ENCODE measurements at regions of chr3 and their contacts with region 1.

Region 1: GRCh38 chr3:15268033-15268631 is 62.1 kb downstream of the CAPN7 start:
- DNase-seq: peak; percentile 79 to 93 (median 82)
- ATAC-seq: peak; percentile 39
- H3K4me3 ChIP-seq: no peak overlapping the region
- H3K4me3 Mint-ChIP-seq: peak overlapping the region; percentile 8
- H3K27ac ChIP-seq: no peak overlapping the region
- H3K27ac Mint-ChIP-seq: peak overlapping the region; percentile 75
- H3K4me1 ChIP-seq: peaks cover 83% of the 10 kb centered on the region
- H3K4me1 Mint-ChIP-seq: peaks cover 86% of the 10 kb centered on the region
- H3K27me3 ChIP-seq: no peaks in the 10 kb centered on the region
- H3K27me3 Mint-ChIP-seq: no peaks in the 10 kb centered on the region
- CTCF ChIP-seq: peak; percentile 84

Region 2: DNA sequence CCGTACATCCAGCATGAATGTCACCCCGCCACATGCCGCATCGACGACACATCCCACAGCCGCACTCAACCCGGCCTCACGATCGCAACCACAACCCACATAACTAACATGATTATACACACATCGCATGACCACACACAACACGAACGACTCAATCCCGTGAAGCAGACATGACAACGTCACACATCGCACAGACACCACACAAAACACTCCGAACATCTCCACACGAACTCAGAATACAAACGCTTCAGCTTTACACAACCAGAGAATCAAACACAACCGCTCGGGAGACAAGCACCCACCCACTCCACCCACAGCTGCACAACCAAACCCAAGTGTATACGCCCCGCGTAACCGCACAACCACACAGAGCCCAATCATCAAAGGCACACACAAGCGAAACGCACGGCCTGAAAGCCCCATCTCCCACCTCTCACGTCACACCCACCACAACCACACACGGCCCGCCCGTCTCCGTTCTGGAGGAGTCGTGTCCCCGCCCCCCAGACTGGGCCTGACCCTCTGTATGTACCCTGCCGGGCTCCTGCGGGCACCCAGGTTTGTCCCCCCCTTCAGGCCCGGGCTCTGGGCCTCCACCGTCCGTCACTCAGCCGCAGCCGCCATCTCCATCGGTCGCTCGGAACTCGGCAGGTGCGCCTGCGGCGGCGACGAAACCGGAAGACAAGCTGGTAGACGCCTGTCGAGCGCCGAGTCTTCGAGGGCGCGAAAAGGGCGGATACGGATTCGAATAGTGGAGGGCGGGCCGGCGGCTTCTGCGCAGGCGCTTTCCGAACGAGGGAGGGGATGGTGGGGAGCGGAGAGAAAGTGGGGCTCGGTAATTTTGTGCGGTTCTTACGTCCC is 169.4 kb before region 1 on chr3 and contains the start of gene RBSN:
- CTCF ChIA-PET with region 1: no interaction called
- POLR2A ChIA-PET with region 1: no interaction called
- intact Hi-C with region 1: loop called in 1 of 2 experiments (anchors 5 kb)
- DNase-seq: peak; percentile 90 to 98 (median 94)
- ATAC-seq: peak; percentile 72
- H3K4me3 ChIP-seq: peak within 1 kb of the TSS; percentile 92
- H3K4me3 Mint-ChIP-seq: peak within 1 kb of the TSS; percentile 96
- H3K27ac ChIP-seq: peak within 1 kb of the TSS; percentile 96 to 98
- H3K27ac Mint-ChIP-seq: peak within 1 kb of the TSS; percentile 97
- H3K4me1 ChIP-seq: peaks cover 33% of the 10 kb centered on the region
- H3K4me1 Mint-ChIP-seq: peaks cover 36% of the 10 kb centered on the region
- H3K27me3 ChIP-seq: no peaks in the 10 kb centered on the region
- H3K27me3 Mint-ChIP-seq: peaks cover 5% of the 10 kb centered on the region
- CTCF ChIP-seq: no peak
- total RNA-seq, gene RBSN: 57.2 to 57.9 TPM

Region 3: GRCh38 chr3:15309662-15310335 is 41.7 kb after region 1 on chr3:
- CTCF ChIA-PET with region 1: interaction called, 9 read pairs
- POLR2A ChIA-PET with region 1: interaction called, 5 read pairs
- intact Hi-C with region 1: loop called in 1 of 2 experiments (anchors 5 kb)
- DNase-seq: no peak
- ATAC-seq: no peak
- H3K4me3 ChIP-seq: no peak overlapping the region
- H3K4me3 Mint-ChIP-seq: peak overlapping the region; percentile 26
- H3K27ac ChIP-seq: no peak overlapping the region
- H3K27ac Mint-ChIP-seq: peak overlapping the region; percentile 84
- H3K4me1 ChIP-seq: peaks cover 76% of the 10 kb centered on the region
- H3K4me1 Mint-ChIP-seq: peaks cover 67% of the 10 kb centered on the region
- H3K27me3 ChIP-seq: no peaks in the 10 kb centered on the region
- H3K27me3 Mint-ChIP-seq: no peaks in the 10 kb centered on the region
- CTCF ChIP-seq: no peak

Region 4: DNA sequence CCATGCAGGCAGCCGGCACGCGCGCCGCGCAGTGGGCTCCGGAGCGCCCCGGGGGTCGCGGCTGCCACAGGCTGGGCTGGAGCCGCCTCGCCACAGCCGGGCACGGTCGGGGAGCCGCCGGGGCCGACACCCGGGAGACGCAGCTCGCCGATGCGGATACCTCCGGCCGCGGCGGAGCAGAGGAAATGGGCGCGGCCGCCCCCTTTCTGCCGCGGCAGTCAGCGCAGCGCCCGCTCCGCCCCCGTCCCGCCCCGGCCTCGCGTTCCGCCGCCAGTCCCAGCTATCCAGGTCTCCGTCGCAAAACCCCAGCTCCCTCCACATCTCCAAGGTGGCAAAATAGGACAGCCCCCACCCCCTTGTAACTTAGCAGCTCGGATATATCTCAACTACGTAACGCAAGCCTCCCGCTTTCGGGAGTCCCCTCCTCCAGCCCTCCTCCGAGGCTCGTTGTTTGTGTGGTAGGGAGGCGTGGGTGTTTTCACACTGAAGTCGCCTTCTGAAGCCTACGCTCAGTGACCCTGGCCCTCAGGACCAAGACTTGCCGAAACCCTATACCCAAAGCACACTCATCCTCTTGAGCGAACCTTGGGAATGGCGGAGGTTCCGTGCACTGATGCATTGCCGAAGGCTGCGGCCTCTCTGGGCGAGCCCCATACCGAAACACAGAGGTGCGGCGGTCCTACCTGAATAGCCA is 64.4 kb after region 1 on chr3 and contains the start of gene SH3BP5:
- CTCF ChIA-PET with region 1: interaction called, 163 read pairs
- POLR2A ChIA-PET with region 1: interaction called, 24 read pairs
- intact Hi-C with region 1: loop called (anchors 1 kb)
- DNase-seq: peak; percentile 45 to 90 (median 70)
- ATAC-seq: peak; percentile 90
- H3K4me3 ChIP-seq: peak within 1 kb of the TSS; percentile 99
- H3K4me3 Mint-ChIP-seq: peak within 1 kb of the TSS; percentile 97
- H3K27ac ChIP-seq: peak within 1 kb of the TSS; percentile 45 to 60
- H3K27ac Mint-ChIP-seq: peak within 1 kb of the TSS; percentile 79
- H3K4me1 ChIP-seq: peaks cover 48% of the 10 kb centered on the region
- H3K4me1 Mint-ChIP-seq: peaks cover 58% of the 10 kb centered on the region
- H3K27me3 ChIP-seq: no peaks in the 10 kb centered on the region
- H3K27me3 Mint-ChIP-seq: no peaks in the 10 kb centered on the region
- CTCF ChIP-seq: peak; percentile 68
- total RNA-seq, gene SH3BP5: 16.8 to 17.7 TPM

Region 5: DNA sequence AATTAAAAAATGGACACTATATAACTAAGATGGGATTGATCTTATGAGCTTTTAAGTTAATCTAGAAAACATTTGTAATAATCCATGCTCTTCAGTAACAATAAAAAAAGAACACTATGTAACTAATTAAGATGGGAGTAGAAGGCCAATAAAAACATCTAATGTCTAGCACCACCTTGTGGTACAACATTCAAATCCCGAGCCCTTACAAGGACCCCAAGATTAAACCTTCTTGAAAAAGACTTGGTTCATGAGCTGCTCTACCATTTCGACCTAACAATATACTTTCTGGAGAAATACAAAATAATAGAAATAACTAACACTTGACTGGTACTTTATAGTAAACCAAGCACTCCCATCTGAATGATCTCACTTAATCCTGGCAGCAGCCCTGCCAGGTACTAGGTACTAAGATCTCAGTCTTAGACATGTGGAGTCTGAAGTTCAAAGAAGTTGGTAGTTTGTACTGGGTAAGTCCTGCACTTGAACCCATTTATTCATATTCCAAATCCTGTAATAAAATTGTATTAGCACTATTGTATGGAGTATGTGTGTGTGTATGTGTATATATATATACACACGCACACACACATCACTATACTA is 137.4 kb after region 1 on chr3:
- CTCF ChIA-PET with region 1: interaction called, 14 read pairs
- POLR2A ChIA-PET with region 1: interaction called, 8 read pairs
- intact Hi-C with region 1: loop called in 1 of 2 experiments (anchors 2 kb)
- DNase-seq: peak in 4 of 14 experiments; percentile 39 to 77 (median 72)
- ATAC-seq: peak; percentile 82
- H3K4me3 ChIP-seq: no peak overlapping the region
- H3K4me3 Mint-ChIP-seq: no peak overlapping the region
- H3K27ac ChIP-seq: no peak overlapping the region
- H3K27ac Mint-ChIP-seq: no peak overlapping the region
- H3K4me1 ChIP-seq: peaks cover 7% of the 10 kb centered on the region
- H3K4me1 Mint-ChIP-seq: peaks cover 1% of the 10 kb centered on the region
- H3K27me3 ChIP-seq: no peaks in the 10 kb centered on the region
- H3K27me3 Mint-ChIP-seq: no peaks in the 10 kb centered on the region
- CTCF ChIP-seq: peak; percentile 63

Region 6: GRCh38 chr3:15731024-15731423 is 462.9 kb after region 1 on chr3:
- CTCF ChIA-PET with region 1: no interaction called
- POLR2A ChIA-PET with region 1: no interaction called
- intact Hi-C with region 1: no loop called
- DNase-seq: peak in 1 of 14 experiments; percentile 8
- ATAC-seq: no peak
- H3K4me3 ChIP-seq: no peak overlapping the region
- H3K4me3 Mint-ChIP-seq: no peak overlapping the region
- H3K27ac ChIP-seq: no peak overlapping the region
- H3K27ac Mint-ChIP-seq: no peak overlapping the region
- H3K4me1 ChIP-seq: no peaks in the 10 kb centered on the region
- H3K4me1 Mint-ChIP-seq: peaks cover 9% of the 10 kb centered on the region
- H3K27me3 ChIP-seq: no peaks in the 10 kb centered on the region
- H3K27me3 Mint-ChIP-seq: no peaks in the 10 kb centered on the region
- CTCF ChIP-seq: no peak